ENCODE measurements at regions of chr21 and their contacts with region 1.

Region 1: GRCh38 chr21:31558962-31559367 is 100.5 kb upstream of the SOD1 start:
- DNase-seq: peak; percentile 93
- H3K4me3 Mint-ChIP-seq: peak overlapping the region; percentile 89
- H3K27ac Mint-ChIP-seq: no peak overlapping the region
- H3K4me1 Mint-ChIP-seq: peaks cover 48% of the 10 kb centered on the region
- H3K27me3 Mint-ChIP-seq: peaks cover 35% of the 10 kb centered on the region

Region 2: GRCh38 chr21:30718239-30718909 is 840.6 kb before region 1 on chr21 and contains the start of gene KRTAP21-3:
- intact Hi-C with region 1: loop called (anchors 10 kb)
- DNase-seq: no peak
- H3K4me3 Mint-ChIP-seq: peak within 1 kb of the TSS; percentile 7
- H3K27ac Mint-ChIP-seq: peak within 1 kb of the TSS; percentile 75
- H3K4me1 Mint-ChIP-seq: peaks cover 29% of the 10 kb centered on the region
- H3K27me3 Mint-ChIP-seq: peaks cover 2% of the 10 kb centered on the region
- total RNA-seq, gene KRTAP21-3: not detected in 2 replicates

Region 3: DNA sequence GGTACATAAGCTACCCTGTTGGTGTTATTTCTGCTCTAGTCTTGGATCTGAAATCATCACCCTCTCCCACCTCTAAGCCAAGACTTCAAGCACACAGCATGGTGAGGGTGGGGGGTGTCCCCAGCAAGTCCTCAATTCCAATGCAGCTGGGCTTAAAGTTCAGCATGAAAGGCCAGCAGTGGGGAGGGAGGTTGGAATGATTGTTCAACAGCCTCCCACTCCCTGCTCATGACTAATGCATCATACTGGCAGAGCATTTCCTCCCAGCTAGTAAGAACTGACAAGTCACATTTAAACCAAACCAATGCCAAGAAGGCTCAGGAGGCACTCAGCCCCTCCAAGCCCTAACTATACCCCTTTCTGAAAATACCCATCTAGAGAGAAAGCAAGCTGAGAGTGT is 265.0 kb before region 1 on chr21:
- intact Hi-C with region 1: loop called (anchors 1 kb)
- DNase-seq: no peak
- H3K4me3 Mint-ChIP-seq: peak overlapping the region; percentile 56
- H3K27ac Mint-ChIP-seq: peak overlapping the region; percentile 86
- H3K4me1 Mint-ChIP-seq: peaks cover 35% of the 10 kb centered on the region
- H3K27me3 Mint-ChIP-seq: no peaks in the 10 kb centered on the region

Region 4: DNA sequence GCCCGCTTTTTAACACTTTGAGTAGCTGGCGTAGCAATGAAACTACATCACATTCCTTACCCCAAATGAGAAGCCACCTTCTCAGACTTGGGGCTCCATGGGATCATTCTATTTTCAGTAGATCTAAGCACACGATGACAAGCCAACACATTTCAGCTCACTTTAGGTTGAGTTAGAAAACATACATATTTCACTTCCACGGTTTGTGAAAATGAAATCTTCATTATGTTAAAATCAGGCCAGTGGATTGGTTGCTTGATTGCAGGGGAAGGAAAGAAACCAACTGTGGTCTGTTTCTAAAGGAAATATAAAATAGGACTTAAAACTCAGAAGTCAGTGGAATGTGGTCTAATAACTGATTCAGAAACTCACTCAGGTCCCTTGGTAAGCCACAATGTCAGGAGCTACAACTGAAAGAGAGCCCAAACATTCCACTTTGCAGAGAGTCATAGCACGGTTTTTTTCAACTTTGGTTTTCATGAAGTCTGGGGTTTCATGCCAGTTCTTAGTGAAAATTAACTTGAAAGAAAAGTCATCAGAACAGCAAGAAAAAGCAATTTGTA is 132.6 kb before region 1 on chr21:
- intact Hi-C with region 1: loop called (anchors 1 kb)
- DNase-seq: peak; percentile 2
- H3K4me3 Mint-ChIP-seq: peak overlapping the region; percentile 50
- H3K27ac Mint-ChIP-seq: peak overlapping the region; percentile 64
- H3K4me1 Mint-ChIP-seq: peaks cover 16% of the 10 kb centered on the region
- H3K27me3 Mint-ChIP-seq: peaks cover 10% of the 10 kb centered on the region

Region 5: GRCh38 chr21:31515253-31515652 is 43.7 kb before region 1 on chr21:
- intact Hi-C with region 1: no loop called
- DNase-seq: no peak
- H3K4me3 Mint-ChIP-seq: no peak overlapping the region
- H3K27ac Mint-ChIP-seq: no peak overlapping the region
- H3K4me1 Mint-ChIP-seq: peaks cover 8% of the 10 kb centered on the region
- H3K27me3 Mint-ChIP-seq: peaks cover 26% of the 10 kb centered on the region

Region 6: GRCh38 chr21:31580866-31581276 is 21.9 kb after region 1 on chr21:
- intact Hi-C with region 1: loop called (anchors 2 kb)
- DNase-seq: peak; percentile 62
- H3K4me3 Mint-ChIP-seq: no peak overlapping the region
- H3K27ac Mint-ChIP-seq: no peak overlapping the region
- H3K4me1 Mint-ChIP-seq: no peaks in the 10 kb centered on the region
- H3K27me3 Mint-ChIP-seq: peaks cover 34% of the 10 kb centered on the region

Region 7: GRCh38 chr21:32278518-32279376 is 719.8 kb after region 1 on chr21 and contains the start of gene MIS18A:
- intact Hi-C with region 1: loop called (anchors 10 kb)
- DNase-seq: peak; percentile 95
- H3K4me3 Mint-ChIP-seq: peak within 1 kb of the TSS; percentile 100
- H3K27ac Mint-ChIP-seq: peak within 1 kb of the TSS; percentile 97
- H3K4me1 Mint-ChIP-seq: peaks cover 21% of the 10 kb centered on the region
- H3K27me3 Mint-ChIP-seq: no peaks in the 10 kb centered on the region
- total RNA-seq, gene MIS18A: 26.8 and 27.5 TPM in 2 replicates

Measured in activated T-helper 1 cell treated with anti-CD3 and anti-CD28 coated beads, Interleukin-12 subunit alpha, Interleukin-12 subunit beta, Interleukin-2, Interleukin-4 antibody, amounts not matched to agents 30 ng/mL and 10 ng/mL and 1 ng/mL, durations not matched to agents 14 hours and 24 hours and 36 hours (primary cell).